CD4-positive, alpha-beta T cell (primary cell): ENCODE measurements at regions of chr2 and their contacts with region 1.

Region 1: GRCh38 chr2:170409164-170409535 is 231.2 kb downstream of the MYO3B start:
- DNase-seq: peak; percentile 50 to 85 (median 70)
- ATAC-seq: peak; percentile 63
- H3K4me3 ChIP-seq: no peak overlapping the region
- H3K4me3 Mint-ChIP-seq: peak overlapping the region; percentile 34
- H3K27ac ChIP-seq: no peak overlapping the region
- H3K27ac Mint-ChIP-seq: no peak overlapping the region
- H3K4me1 ChIP-seq: peaks cover 6% of the 10 kb centered on the region
- H3K4me1 Mint-ChIP-seq: peaks cover 15% of the 10 kb centered on the region
- H3K27me3 ChIP-seq: peaks cover 8 to 30% of the 10 kb centered on the region in 2 experiments
- H3K27me3 Mint-ChIP-seq: peaks cover 44% of the 10 kb centered on the region
- CTCF ChIP-seq: peak; percentile 87

Region 2: GRCh38 chr2:170324640-170325046 is 84.5 kb before region 1 on chr2:
- CTCF ChIA-PET with region 1: no interaction called
- POLR2A ChIA-PET with region 1: no interaction called
- intact Hi-C with region 1: loop called in 1 of 2 experiments (anchors 5 kb)
- DNase-seq: peak in 8 of 14 experiments; percentile 1 to 55 (median 21)
- ATAC-seq: peak; percentile 43
- H3K4me3 ChIP-seq: no peak overlapping the region
- H3K4me3 Mint-ChIP-seq: no peak overlapping the region
- H3K27ac ChIP-seq: no peak overlapping the region
- H3K27ac Mint-ChIP-seq: no peak overlapping the region
- H3K4me1 ChIP-seq: no peaks in the 10 kb centered on the region
- H3K4me1 Mint-ChIP-seq: no peaks in the 10 kb centered on the region
- H3K27me3 ChIP-seq: no peaks in the 10 kb centered on the region
- H3K27me3 Mint-ChIP-seq: peaks cover 4% of the 10 kb centered on the region
- CTCF ChIP-seq: peak; percentile 51

Region 3: DNA sequence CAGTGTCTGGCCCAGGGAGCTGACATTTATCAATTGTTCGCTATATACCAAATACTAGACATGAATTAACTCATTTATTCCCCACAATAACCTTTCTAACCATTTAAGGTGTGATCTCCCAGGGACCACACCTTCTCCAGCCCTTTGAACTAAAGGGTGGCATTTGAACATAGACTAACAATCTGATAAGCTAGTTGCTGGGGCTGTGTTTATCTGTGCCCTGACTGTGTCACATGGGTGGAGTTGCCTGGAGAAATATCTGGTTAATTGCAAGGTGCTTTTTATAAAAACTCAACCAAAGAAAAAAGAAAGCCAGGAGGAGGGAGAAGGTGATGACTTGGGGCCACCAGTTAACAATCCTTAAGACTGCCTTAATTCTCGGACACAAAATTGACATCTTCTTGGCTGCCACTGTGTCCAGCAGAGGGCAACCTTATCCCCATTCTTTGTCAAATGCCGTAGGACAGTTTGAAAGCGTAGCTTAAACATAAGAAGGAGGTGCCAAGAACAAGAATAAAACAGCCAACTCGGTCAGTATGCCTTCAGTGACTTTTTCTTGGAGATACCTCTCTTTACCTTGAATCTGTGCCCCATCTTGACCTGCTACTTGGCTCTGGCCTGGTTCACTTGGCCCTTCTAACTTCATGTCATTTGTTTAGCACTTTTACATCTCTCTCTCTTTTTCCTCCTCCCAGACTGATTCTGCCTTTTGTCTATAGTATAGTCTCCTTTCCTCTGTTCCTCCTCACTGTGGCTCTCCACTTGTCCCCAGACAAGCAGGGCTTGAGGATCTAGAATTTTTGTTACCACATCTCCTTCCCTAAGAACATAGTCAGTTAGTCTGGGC is 47.8 kb before region 1 on chr2:
- CTCF ChIA-PET with region 1: no interaction called
- POLR2A ChIA-PET with region 1: no interaction called
- intact Hi-C with region 1: no loop called
- DNase-seq: peak; percentile 10 to 74 (median 30)
- ATAC-seq: peak; percentile 82
- H3K4me3 ChIP-seq: no peak overlapping the region
- H3K4me3 Mint-ChIP-seq: no peak overlapping the region
- H3K27ac ChIP-seq: no peak overlapping the region
- H3K27ac Mint-ChIP-seq: no peak overlapping the region
- H3K4me1 ChIP-seq: peaks cover 3% of the 10 kb centered on the region
- H3K4me1 Mint-ChIP-seq: peaks cover 16% of the 10 kb centered on the region
- H3K27me3 ChIP-seq: peaks cover 4 to 12% of the 10 kb centered on the region in 2 experiments
- H3K27me3 Mint-ChIP-seq: peaks cover 6% of the 10 kb centered on the region
- CTCF ChIP-seq: peak; percentile 75